GM10248 (cell line): ENCODE measurements at regions of chr4 and their contacts with region 1.

Region 1: GRCh38 chr4:22389240-22389870 is 126.5 kb downstream of the ADGRA3 start:
- DNase-seq: peak; percentile 26
- CTCF ChIP-seq: peak; percentile 74

Region 2: DNA sequence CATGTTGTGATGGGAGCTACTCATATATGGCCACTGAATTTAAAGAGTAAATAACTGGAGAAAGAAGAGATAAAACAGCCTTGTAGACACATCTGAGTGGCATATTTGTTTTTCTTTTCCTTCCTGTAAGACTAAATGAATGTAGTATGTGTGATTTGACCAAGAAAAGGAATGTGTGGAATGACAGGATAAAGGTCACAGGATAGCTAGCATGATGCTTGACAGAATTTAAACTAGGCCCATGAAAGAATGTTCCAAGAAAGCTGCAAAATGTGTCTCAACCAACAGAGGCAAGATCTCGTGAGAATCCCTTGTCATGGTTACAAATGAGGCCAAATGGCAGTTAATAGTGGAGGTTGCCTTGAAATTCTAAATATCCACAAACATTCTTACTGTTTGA is 577.8 kb before region 1 on chr4:
- CTCF ChIA-PET with region 1: interaction called, 10 read pairs
- POLR2A ChIA-PET with region 1: no interaction called
- DNase-seq: no peak
- CTCF ChIP-seq: no peak

Region 3: DNA sequence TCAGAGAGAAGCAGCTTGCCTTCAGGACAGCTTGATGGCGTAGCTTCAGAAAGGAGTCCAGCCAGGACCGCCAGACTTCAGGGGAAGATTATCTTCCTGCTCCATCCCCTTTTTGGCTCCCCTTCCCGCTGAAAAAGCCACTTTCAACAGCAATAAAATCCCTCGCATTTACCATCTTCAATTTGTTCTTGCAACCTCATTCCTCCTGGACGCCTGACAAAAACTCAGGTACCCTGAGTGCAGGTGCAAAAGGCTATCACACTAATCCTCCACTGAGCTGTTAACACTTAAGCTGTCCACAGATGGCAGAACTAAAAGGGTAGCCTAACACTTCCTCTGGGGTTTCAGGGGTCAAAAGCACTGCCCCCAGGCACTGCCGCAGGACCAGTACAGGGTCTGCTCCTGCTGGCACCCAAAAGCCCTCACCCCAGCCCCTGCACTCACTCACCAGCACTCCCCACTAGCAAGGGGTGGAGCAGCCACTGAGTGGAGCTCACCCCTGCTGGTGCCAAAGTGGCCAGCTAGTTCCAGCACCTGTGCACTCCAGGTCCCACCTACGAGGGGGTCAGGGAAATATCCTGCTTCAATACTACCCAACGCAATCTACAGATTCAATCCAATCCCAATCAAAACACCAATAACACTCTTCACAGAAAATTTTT is 19.3 kb before region 1 on chr4:
- CTCF ChIA-PET with region 1: interaction called, 13 read pairs
- POLR2A ChIA-PET with region 1: no interaction called
- DNase-seq: no peak
- CTCF ChIP-seq: no peak